H1 (cell line): ENCODE measurements at regions of chr3 and their contacts with region 1.

Region 1: DNA sequence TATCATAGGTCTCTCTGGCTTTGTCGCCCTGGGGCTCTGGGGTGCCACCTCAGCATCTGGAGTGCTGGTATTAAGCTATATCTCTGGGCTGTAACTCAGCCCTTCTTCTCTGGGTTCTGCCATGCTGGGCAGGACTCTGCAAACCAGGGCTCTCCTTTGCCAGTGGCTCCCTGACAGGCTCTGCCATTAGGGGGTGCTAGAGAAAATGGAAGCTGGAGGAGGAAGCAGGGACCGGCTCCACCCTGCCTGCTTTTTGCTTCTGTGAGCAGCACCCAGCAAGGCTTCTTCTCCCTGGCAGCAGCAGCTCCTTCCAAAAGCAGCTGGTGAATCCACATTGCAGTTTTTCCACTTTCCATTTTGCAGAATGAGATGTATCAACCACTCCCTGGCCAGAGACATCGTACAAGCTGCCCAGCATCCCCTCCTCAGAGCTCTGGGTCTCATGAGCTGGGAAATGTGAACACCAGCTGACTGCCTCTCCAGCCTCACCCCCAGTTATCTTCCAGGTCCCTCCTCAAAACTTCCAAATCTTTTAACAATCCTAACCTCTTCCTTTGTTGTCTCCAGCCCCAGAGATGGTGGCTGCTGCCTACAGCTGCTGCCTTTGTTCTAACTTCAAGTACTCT is 165.0 kb downstream of the ABHD5 start:
- DNase-seq: peak in 1 of 2 experiments; percentile 84
- H3K4me3 ChIP-seq: no peak overlapping the region
- H3K27ac ChIP-seq: no peak overlapping the region
- H3K4me1 ChIP-seq: peaks cover 6 to 10% (median 9%) of the 10 kb centered on the region in 4 experiments
- H3K27me3 ChIP-seq: peaks cover 0 to 3% (median under 1%) of the 10 kb centered on the region in 4 experiments; a peak in 2 of 7 replicates
- CTCF ChIP-seq: peak; percentile 77 to 89 (median 86)
- EP300 ChIP-seq: no peak
- POLR2A ChIP-seq: no peak
- RAD21 ChIP-seq: peak; percentile 75 to 83

Region 2: GRCh38 chr3:43748179-43748578 is 107.6 kb before region 1 on chr3:
- CTCF ChIA-PET with region 1: no interaction called
- POLR2A ChIA-PET with region 1: no interaction called
- DNase-seq: no peak
- H3K4me3 ChIP-seq: no peak overlapping the region
- H3K27ac ChIP-seq: no peak overlapping the region
- H3K4me1 ChIP-seq: peaks cover 0 to 2% (median 0%) of the 10 kb centered on the region in 4 experiments; a peak in 1 of 7 replicates
- H3K27me3 ChIP-seq: no peaks in the 10 kb centered on the region; a peak in 2 of 7 replicates
- CTCF ChIP-seq: no peak
- EP300 ChIP-seq: no peak
- POLR2A ChIP-seq: no peak
- RAD21 ChIP-seq: no peak

Region 3: DNA sequence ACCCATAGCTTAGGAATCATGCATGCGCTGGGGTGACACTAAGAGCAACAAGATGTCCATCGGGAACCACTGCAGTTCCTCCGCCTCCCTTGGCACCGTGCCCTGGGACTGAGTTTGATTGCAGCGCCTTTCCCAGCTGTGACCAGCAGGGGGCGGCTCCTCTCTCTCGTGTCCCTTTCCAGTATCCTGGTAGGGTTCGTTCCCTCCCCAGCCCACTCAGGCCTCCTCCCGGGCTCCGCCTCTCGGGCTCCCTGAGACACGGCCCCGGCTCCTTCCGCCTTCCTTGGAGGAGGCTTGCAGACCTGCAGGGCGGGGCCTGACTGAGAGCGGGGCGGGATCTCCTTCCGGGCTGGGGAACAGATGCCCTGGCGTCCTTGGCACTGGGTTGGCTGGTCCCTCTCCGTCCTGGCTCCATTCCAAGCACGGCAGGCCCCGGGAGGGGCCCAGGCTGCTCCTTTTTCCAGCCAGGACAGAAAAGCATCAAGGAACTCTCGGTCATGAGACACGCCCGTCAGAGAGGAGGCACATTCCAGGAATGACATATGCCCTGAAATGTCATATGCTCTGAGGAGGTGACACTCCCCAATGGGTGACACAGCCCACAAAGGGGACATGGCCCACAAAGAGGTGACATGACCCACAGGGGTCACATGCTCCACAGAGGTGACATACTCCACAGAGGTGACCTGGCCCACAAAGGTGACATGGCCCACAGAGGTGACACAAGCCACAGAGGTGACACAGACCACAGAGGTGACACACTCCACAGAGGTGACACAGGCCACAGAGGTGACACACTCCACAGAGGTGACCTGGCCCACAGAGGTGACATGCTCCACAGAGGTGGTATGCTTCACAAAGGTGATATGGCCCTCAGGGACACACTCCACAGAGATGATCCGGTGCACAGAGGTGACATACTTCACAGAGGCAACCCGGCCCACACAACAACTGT is 86.0 kb before region 1 on chr3:
- CTCF ChIA-PET with region 1: interaction called, 10 read pairs
- POLR2A ChIA-PET with region 1: no interaction called
- DNase-seq: peak; percentile 96 to 99
- H3K4me3 ChIP-seq: peak overlapping the region in 1 of 4 experiments; percentile 38; a peak in 3 of 8 replicates
- H3K27ac ChIP-seq: no peak overlapping the region
- H3K4me1 ChIP-seq: peaks cover 0 to 8% (median 2%) of the 10 kb centered on the region in 4 experiments; a peak in 2 of 7 replicates
- H3K27me3 ChIP-seq: peaks cover 0 to 2% (median 0%) of the 10 kb centered on the region in 4 experiments; a peak in 2 of 7 replicates
- CTCF ChIP-seq: peak; percentile 92 to 98 (median 96)
- EP300 ChIP-seq: no peak
- POLR2A ChIP-seq: no peak
- RAD21 ChIP-seq: peak; percentile 80 to 86

Region 4: DNA sequence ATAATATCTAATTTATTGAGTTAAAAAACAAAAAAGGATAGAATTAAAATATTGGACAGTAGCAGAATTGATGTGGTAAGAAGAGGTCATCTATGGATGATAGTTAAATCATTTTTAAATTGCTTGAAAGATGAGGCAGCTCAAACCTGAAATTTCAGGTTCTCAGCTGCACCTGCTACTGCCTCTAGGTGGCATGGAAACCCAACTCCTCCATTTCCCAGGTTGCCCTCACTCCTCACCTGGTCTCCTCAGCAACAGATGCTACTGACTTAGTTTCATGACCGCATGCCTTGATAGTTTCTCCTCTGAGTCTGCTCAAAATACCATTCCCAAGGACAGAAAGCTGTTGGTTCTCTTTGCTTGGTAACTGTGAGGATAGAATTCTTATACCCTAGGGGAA is 16.9 kb before region 1 on chr3:
- CTCF ChIA-PET with region 1: interaction called, 66 read pairs
- POLR2A ChIA-PET with region 1: no interaction called
- DNase-seq: no peak
- H3K4me3 ChIP-seq: no peak overlapping the region
- H3K27ac ChIP-seq: no peak overlapping the region
- H3K4me1 ChIP-seq: no peaks in the 10 kb centered on the region
- H3K27me3 ChIP-seq: no peaks in the 10 kb centered on the region
- CTCF ChIP-seq: peak; percentile 37 to 71 (median 55)
- EP300 ChIP-seq: no peak
- POLR2A ChIP-seq: no peak
- RAD21 ChIP-seq: peak; percentile 78 to 81

Region 5: DNA sequence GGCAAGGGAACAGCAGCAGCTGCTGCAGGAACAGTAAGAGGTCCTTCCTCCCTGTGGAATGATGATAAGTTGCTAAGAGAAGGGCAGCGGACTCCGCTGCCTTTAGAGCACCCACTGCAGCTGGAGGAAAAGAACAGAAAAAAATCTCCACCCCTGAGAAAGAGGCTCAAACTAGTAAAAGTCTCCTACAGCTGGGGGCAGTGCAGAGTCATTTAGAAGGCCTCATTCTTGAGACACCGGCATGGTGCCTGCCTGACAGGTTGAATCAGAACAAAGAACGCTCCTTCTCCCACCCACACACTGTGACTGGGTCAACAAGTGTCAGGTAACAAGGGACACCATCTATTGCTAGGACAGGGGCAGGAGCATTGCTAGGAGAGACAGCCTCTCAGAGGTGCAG is 23.4 kb after region 1 on chr3:
- CTCF ChIA-PET with region 1: interaction called, 39 read pairs
- POLR2A ChIA-PET with region 1: no interaction called
- DNase-seq: peak in 1 of 2 experiments; percentile 63
- H3K4me3 ChIP-seq: no peak overlapping the region
- H3K27ac ChIP-seq: no peak overlapping the region
- H3K4me1 ChIP-seq: peaks cover 0 to 7% (median 5%) of the 10 kb centered on the region in 4 experiments; a peak in 6 of 7 replicates
- H3K27me3 ChIP-seq: no peaks in the 10 kb centered on the region; a peak in 1 of 7 replicates
- CTCF ChIP-seq: peak; percentile 37 to 75 (median 62)
- EP300 ChIP-seq: 0 out of 3 replicates have a peak, but pooled peaks of 1 of the 2 experiments have one; percentile 35
- POLR2A ChIP-seq: no peak
- RAD21 ChIP-seq: peak; percentile 76 to 85

Region 6: DNA sequence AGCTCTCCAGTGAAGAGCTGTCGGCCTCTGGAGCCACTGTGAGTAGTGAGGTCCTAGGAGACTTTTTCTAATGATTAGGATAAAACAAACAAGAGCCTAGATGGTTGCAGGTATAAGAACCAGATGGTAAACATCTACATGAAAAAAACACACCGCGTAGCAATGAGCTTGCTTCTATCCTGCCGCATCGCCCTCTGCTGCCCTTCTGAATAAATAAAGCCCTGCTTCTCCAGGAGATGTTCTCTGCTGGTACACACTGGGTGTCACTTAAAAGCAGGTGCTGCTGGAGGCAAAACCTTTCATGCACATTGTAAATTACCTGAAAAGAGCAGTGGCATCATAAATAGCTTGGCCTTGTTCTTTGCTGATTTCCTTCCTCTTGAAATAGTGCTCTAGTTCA is 221.5 kb after region 1 on chr3:
- CTCF ChIA-PET with region 1: interaction called, 16 read pairs
- POLR2A ChIA-PET with region 1: no interaction called
- DNase-seq: no peak
- H3K4me3 ChIP-seq: no peak overlapping the region; a peak in 1 of 8 replicates
- H3K27ac ChIP-seq: no peak overlapping the region
- H3K4me1 ChIP-seq: peaks cover 0 to 12% (median 9%) of the 10 kb centered on the region in 4 experiments
- H3K27me3 ChIP-seq: no peaks in the 10 kb centered on the region; a peak in 1 of 7 replicates
- CTCF ChIP-seq: peak; percentile 9 to 39 (median 28); a peak in 3 of 4 replicates
- EP300 ChIP-seq: no peak
- POLR2A ChIP-seq: no peak
- RAD21 ChIP-seq: peak; percentile 17 to 51; a peak in 3 of 4 replicates